Kidney (tissue), 22 donors: ENCODE measurements at regions of chr14 and their contacts with region 1.

Region 1: DNA sequence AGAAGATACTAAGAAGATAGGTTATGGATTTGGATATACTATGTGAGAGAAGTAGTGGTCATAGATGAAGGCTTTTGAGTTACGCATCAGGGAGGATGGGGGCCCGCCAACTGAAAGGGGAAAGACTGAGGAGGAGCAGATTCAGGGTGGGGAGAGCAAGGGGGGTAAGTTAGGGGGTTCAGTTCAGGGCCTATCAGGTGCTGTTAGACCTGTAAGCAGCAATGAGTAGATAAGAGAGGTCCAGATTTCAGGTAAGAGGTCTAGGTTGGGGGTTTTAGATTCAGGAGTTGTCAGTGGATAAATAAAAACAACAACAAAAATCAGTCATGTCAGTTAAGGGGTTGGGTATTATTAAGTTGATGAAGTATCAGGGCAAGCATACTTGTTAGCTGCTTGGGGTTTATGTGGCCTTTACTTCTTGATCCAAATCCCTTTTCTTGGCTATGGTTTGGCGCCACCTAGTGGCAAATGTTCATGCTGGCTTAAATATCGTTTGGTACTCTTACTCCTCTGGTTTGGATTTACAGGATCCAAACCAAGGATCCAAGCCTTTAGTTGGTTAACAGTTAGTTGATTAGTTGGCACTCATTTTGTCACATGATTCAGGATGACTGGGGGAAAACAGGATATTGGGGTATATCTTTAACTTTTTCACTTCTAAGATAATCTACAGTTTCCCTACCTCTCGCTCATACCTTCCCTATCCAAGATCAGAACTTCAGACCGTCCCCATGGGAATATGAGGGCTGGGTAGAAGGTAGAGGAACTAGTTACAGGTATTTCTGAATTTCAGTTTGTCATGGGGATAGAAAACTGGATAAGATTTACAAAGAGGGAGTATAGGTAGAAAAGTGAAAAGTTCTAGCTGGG is 65.1 kb downstream of the PCNX1 start:
- DNase-seq: peak; percentile 69 to 94 (median 86)
- H3K4me3 ChIP-seq: no peak overlapping the region
- H3K27ac ChIP-seq: no peak overlapping the region
- H3K4me1 ChIP-seq: no peaks in the 10 kb centered on the region
- H3K27me3 ChIP-seq: no peaks in the 10 kb centered on the region
- CTCF ChIP-seq: peak; percentile 82

Region 2: GRCh38 chr14:70809543-70810244 is 162.6 kb before region 1 on chr14:
- intact Hi-C with region 1: loop called (anchors 10 kb)
- DNase-seq: peak; percentile 97 to 99 (median 98)
- H3K4me3 ChIP-seq: peak overlapping the region; percentile 65 to 83 (median 78)
- H3K27ac ChIP-seq: no peak overlapping the region
- H3K4me1 ChIP-seq: peaks cover 0 to 6% (median 2%) of the 10 kb centered on the region in 3 donors
- H3K27me3 ChIP-seq: no peaks in the 10 kb centered on the region
- CTCF ChIP-seq: no peak